Caco-2 (cell line): ENCODE measurements at regions of chr2 and their contacts with region 1.

Region 1: DNA sequence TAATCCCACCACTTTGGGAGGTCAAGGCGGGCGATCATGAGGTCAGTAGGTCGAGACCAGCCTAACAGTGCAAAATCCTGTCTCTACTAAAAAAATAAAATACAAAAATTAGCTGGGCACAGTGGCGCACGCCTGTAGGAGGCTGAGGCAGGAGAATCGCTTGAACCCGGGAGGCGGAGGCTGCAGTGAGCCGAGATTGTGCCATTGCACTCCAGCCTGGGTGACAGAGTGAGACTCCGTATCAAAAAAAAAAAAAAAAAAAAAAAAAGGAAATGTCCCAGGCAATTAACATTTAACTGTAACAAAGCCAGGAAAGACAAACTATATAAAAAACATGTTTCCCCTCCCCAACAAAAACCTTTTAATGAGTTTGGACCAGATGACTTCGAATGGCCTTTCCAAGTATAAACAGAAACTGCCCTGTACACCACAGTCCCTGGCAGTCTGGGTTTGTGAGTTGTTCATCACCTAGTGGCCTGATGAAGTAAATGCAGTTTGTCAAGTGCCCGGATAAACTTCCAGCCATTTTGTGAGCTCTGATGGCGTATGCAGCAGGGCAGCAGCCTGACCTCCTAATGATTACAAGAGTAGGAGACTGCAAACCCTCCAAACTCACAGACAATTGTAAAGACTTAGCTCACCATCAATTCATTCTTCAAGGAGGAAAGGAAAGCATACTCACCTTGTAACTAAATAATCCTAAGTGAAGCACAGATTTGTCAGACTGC is 16.6 kb upstream of the PCBP1 start:
- DNase-seq: peak; percentile 76 to 79
- H3K4me3 ChIP-seq: no peak overlapping the region
- H3K4me3 Mint-ChIP-seq: no peak overlapping the region
- H3K27ac Mint-ChIP-seq: peak overlapping the region; percentile 38
- H3K4me1 ChIP-seq: peaks cover 14% of the 10 kb centered on the region
- H3K4me1 Mint-ChIP-seq: peaks cover 13% of the 10 kb centered on the region
- H3K27me3 ChIP-seq: no peaks in the 10 kb centered on the region
- H3K27me3 Mint-ChIP-seq: no peaks in the 10 kb centered on the region
- CTCF ChIP-seq: peak; percentile 79 to 91

Region 2: GRCh38 chr2:69923116-69923515 is 147.6 kb before region 1 on chr2:
- CTCF ChIA-PET with region 1: interaction called, 14 read pairs
- POLR2A ChIA-PET with region 1: no interaction called
- intact Hi-C with region 1: no loop called
- DNase-seq: no peak
- H3K4me3 ChIP-seq: no peak overlapping the region
- H3K4me3 Mint-ChIP-seq: no peak overlapping the region
- H3K27ac Mint-ChIP-seq: no peak overlapping the region
- H3K4me1 ChIP-seq: no peaks in the 10 kb centered on the region
- H3K4me1 Mint-ChIP-seq: no peaks in the 10 kb centered on the region
- H3K27me3 ChIP-seq: no peaks in the 10 kb centered on the region
- H3K27me3 Mint-ChIP-seq: no peaks in the 10 kb centered on the region
- CTCF ChIP-seq: no peak

Region 3: DNA sequence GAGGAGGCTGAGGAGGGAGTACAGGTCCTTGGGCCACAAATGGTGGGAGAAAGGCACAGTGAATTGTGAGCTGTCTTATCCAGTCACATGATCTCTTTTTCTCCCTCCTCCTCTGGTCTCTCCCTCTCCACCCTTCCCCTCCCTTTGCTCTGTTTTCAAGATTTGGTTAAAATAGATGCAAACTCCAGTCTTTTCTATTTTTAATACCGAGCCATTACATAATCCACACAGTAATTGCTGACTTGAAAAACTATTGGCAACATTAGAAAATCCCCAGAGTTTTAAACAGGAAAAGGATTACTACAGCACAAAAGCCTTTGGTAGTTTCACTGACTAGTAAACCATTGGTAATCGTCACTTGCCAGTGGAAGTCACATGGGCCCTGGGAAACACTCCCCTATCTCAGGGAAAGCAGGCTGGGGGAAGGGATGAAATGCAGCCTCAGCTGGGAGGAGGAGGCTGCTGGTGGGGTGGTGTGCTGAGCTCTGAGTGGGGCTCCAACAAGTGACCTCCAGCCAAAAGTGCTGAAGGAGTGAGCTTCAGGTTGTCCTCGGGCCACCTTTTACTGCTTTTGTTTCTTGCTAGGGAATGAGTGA is 40.8 kb before region 1 on chr2:
- CTCF ChIA-PET with region 1: no interaction called
- POLR2A ChIA-PET with region 1: no interaction called
- intact Hi-C with region 1: no loop called
- DNase-seq: peak; percentile 43 to 49
- H3K4me3 ChIP-seq: no peak overlapping the region
- H3K4me3 Mint-ChIP-seq: no peak overlapping the region
- H3K27ac Mint-ChIP-seq: no peak overlapping the region
- H3K4me1 ChIP-seq: peaks cover 15% of the 10 kb centered on the region
- H3K4me1 Mint-ChIP-seq: no peaks in the 10 kb centered on the region
- H3K27me3 ChIP-seq: no peaks in the 10 kb centered on the region
- H3K27me3 Mint-ChIP-seq: no peaks in the 10 kb centered on the region
- CTCF ChIP-seq: no peak

Region 4: GRCh38 chr2:70052676-70053075 is 18.0 kb before region 1 on chr2:
- CTCF ChIA-PET with region 1: interaction called, 11 read pairs
- POLR2A ChIA-PET with region 1: no interaction called
- intact Hi-C with region 1: no loop called
- DNase-seq: peak in 1 of 2 experiments; percentile 13
- H3K4me3 ChIP-seq: no peak overlapping the region
- H3K4me3 Mint-ChIP-seq: no peak overlapping the region
- H3K27ac Mint-ChIP-seq: no peak overlapping the region
- H3K4me1 ChIP-seq: no peaks in the 10 kb centered on the region
- H3K4me1 Mint-ChIP-seq: no peaks in the 10 kb centered on the region
- H3K27me3 ChIP-seq: no peaks in the 10 kb centered on the region
- H3K27me3 Mint-ChIP-seq: no peaks in the 10 kb centered on the region
- CTCF ChIP-seq: no peak

Region 5: DNA sequence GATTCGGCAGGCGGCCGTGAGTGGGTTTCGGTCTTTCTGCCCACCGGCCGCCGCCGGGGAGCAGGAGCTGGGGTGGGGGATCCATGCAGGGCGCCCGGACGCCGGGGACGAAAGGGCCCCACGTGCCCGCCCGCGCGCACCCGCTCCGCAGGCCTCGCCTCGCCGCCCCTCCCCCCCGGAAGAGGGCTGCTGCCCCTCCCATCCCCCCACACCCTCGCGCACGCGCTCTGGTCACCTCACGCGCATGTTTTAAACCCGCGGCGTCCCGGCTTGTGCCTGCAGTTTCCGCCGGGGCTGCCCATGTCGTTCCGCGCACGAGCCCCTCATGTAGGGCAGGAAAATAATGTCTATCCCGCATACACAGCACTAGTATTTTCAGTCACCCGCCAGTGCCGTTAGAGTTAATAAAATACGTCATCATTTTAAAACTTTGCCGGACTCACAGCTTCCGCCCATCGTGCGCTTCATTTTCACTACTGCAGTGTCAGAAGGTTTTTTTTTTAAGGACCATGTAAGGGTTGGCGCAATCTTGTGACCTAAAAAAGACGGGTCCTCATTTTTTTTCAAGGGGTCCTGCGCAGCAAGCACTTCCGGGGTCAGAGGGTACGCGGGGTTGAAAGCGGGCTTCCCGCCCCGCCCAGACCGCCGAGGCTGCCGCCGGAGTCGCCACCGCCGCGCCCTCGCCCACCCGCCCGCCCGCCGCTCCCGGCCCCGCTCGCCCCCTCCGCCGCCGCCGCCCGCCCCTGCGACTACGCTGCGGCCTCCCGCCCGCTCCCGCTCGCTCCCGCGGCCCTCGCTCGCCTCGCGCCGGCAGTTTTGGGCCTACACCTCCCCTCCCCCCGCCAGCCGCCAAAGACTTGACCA is 16.4 kb after region 1 on chr2 and contains the start of gene PCBP1:
- CTCF ChIA-PET with region 1: interaction called, 11 read pairs
- POLR2A ChIA-PET with region 1: interaction called, 10 read pairs
- intact Hi-C with region 1: no loop called
- DNase-seq: peak; percentile 96 to 98
- H3K4me3 ChIP-seq: peak within 1 kb of the TSS; percentile 68
- H3K4me3 Mint-ChIP-seq: peak within 1 kb of the TSS; percentile 92
- H3K27ac Mint-ChIP-seq: peak within 1 kb of the TSS; percentile 100
- H3K4me1 ChIP-seq: peaks cover 17% of the 10 kb centered on the region; the same call in 1 of the 2 replicates
- H3K4me1 Mint-ChIP-seq: peaks cover 29% of the 10 kb centered on the region
- H3K27me3 ChIP-seq: no peaks in the 10 kb centered on the region
- H3K27me3 Mint-ChIP-seq: no peaks in the 10 kb centered on the region
- CTCF ChIP-seq: no peak
- total RNA-seq, gene PCBP1: 308 and 319 TPM in 2 replicates

Region 6: GRCh38 chr2:70124983-70125480 is 54.3 kb after region 1 on chr2:
- CTCF ChIA-PET with region 1: interaction called, 6 read pairs
- POLR2A ChIA-PET with region 1: interaction called, 3 read pairs
- intact Hi-C with region 1: loop called (anchors 1 kb)
- DNase-seq: peak; percentile 72 to 76
- H3K4me3 ChIP-seq: peak overlapping the region; percentile 84
- H3K4me3 Mint-ChIP-seq: peak overlapping the region; percentile 91
- H3K27ac Mint-ChIP-seq: peak overlapping the region; percentile 99
- H3K4me1 ChIP-seq: peaks cover 29% of the 10 kb centered on the region
- H3K4me1 Mint-ChIP-seq: peaks cover 35% of the 10 kb centered on the region
- H3K27me3 ChIP-seq: no peaks in the 10 kb centered on the region
- H3K27me3 Mint-ChIP-seq: no peaks in the 10 kb centered on the region
- CTCF ChIP-seq: no peak

Region 7: DNA sequence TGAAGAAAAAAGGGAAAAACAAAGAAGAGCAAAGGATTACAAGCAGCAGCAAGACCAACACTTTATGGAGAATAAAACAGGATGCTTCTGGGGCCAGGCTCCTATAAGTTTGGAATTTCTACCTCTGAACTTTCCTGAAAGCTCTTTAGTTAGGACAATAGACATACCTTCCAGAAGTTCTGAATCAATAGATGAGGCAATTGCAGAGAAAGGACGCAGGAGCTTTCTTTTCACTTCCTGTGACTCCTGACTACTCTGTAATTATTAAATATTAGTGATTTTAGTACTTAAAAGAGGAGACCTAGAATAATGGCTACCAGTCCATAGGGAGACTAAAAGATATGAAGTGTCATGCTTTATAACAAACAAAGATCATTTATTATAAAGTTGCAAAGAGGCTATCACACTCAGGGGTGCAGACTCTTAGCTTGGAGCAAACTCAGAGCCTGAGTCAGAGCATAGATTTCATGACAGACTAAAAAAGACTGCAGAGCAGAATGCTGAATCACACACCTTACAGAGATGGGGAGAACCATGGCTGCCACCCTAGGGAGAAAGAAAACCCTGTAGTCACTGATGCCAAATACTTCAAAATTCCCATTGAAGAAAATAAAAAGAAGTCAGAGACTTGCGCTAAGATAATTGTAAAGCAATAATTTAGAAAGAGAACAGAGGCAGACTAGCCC is 283.7 kb after region 1 on chr2:
- CTCF ChIA-PET with region 1: no interaction called
- POLR2A ChIA-PET with region 1: no interaction called
- intact Hi-C with region 1: no loop called
- DNase-seq: no peak
- H3K4me3 ChIP-seq: no peak overlapping the region
- H3K4me3 Mint-ChIP-seq: no peak overlapping the region
- H3K27ac Mint-ChIP-seq: no peak overlapping the region
- H3K4me1 ChIP-seq: no peaks in the 10 kb centered on the region
- H3K4me1 Mint-ChIP-seq: no peaks in the 10 kb centered on the region
- H3K27me3 ChIP-seq: no peaks in the 10 kb centered on the region
- H3K27me3 Mint-ChIP-seq: peaks cover 31% of the 10 kb centered on the region
- CTCF ChIP-seq: no peak

Region 8: GRCh38 chr2:70403267-70404053 is 332.8 kb after region 1 on chr2:
- CTCF ChIA-PET with region 1: no interaction called
- POLR2A ChIA-PET with region 1: no interaction called
- intact Hi-C with region 1: no loop called
- DNase-seq: no peak
- H3K4me3 ChIP-seq: no peak overlapping the region
- H3K4me3 Mint-ChIP-seq: no peak overlapping the region
- H3K27ac Mint-ChIP-seq: no peak overlapping the region
- H3K4me1 ChIP-seq: no peaks in the 10 kb centered on the region
- H3K4me1 Mint-ChIP-seq: no peaks in the 10 kb centered on the region
- H3K27me3 ChIP-seq: no peaks in the 10 kb centered on the region; the same call in 1 of the 2 replicates
- H3K27me3 Mint-ChIP-seq: peaks cover 8% of the 10 kb centered on the region
- CTCF ChIP-seq: no peak

Region 9: DNA sequence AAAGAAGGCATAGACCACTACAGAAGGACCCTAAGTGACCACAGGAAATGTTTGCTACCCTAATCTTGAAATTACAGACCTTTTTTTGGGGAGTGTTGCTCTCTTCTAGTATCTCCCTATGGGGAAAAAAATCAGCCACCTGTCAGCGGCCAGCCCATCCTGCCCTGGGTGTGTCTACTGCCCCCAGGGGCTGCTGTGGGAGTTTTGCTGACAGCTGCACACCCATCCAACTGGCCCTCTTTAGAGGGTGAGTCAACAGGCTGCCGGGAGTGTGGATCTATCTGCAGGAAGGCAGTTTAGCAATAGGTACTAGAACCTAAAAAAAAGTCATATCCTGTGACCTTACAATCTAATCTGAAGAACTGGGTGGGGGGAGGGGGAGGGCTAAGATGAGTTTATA is 1381.9 kb after region 1 on chr2:
- CTCF ChIA-PET with region 1: no interaction called
- POLR2A ChIA-PET with region 1: interaction called, 12 read pairs
- intact Hi-C with region 1: no loop called
- DNase-seq: peak; percentile 70 to 81
- H3K4me3 ChIP-seq: no peak overlapping the region
- H3K4me3 Mint-ChIP-seq: peak overlapping the region; percentile 26
- H3K27ac Mint-ChIP-seq: no peak overlapping the region
- H3K4me1 ChIP-seq: peaks cover 18% of the 10 kb centered on the region
- H3K4me1 Mint-ChIP-seq: peaks cover 23% of the 10 kb centered on the region
- H3K27me3 ChIP-seq: no peaks in the 10 kb centered on the region
- H3K27me3 Mint-ChIP-seq: no peaks in the 10 kb centered on the region
- CTCF ChIP-seq: peak; percentile 37 to 51